ENCODE measurements at regions of chr20 and their contacts with region 1.

Region 1: DNA sequence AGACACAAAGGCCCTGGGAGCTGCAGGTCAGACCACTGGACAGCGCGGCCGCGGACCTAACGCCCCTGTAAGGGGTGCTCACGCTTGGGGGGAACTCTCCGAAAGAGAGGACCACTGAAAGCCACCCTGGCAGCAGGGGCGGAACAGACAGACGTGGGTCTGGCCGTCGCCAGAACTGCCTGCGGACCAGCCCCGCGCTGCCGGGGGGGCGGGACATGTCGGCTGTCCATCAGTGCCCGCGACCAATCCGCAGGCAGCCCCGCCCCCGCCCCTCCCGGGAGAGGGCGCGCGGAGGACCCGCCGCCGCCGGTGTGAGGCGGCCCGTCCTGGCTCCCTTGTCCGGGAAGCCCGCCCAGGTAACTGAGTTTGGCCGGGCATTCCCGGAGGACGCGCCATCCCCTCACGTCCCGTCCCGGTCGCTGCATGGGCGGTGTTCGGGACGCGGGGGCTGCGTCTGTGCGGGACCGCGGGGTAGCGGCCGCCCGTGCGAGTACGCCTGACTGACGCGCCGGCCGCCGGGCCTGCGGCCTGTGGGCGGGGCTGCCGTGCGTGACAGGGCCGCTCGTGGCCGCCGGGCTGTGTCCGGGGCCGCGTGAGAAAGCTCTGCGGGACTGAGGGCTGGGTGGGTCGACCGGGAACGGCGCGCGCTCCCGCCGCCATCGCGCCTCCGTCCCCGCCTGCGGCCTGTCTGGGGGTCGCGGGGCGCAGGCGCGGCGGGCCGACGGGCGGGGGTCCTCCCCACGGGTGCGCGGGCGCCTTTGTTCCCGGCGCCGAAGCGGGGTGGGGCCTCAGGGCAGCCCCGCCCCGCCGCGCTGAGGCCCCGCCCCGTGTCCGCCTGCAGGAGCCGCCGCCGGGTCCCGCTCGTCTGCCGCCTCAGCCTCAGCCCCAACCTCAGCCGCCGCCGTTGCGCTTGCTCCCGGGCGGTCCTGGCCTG is at the start of gene PLCG1:
- DNase-seq: no peak
- ATAC-seq: peak; percentile 63
- H3K4me3 ChIP-seq: peak within 1 kb of the TSS; percentile 81
- H3K27ac ChIP-seq: peak within 1 kb of the TSS; percentile 88
- H3K4me1 ChIP-seq: peaks cover 56% of the 10 kb centered on the region
- H3K27me3 ChIP-seq: no peaks in the 10 kb centered on the region
- CTCF ChIP-seq: no peak
- EP300 ChIP-seq: no peak
- POLR2A ChIP-seq: peak; percentile 65
- RAD21 ChIP-seq: no peak
- polyA plus RNA-seq, gene PLCG1: 2.6 to 3.0 TPM

Region 2: GRCh38 chr20:40339661-40340449 is 797.1 kb before region 1 on chr20:
- CTCF ChIA-PET with region 1: no interaction called
- POLR2A ChIA-PET with region 1: no interaction called
- RAD21 ChIA-PET with region 1: no interaction called
- SMC1A ChIA-PET with region 1: no interaction called
- in situ Hi-C with region 1: no loop called
- intact Hi-C with region 1: no loop called
- DNase-seq: no peak
- ATAC-seq: no peak
- H3K4me3 ChIP-seq: no peak overlapping the region
- H3K27ac ChIP-seq: no peak overlapping the region
- H3K4me1 ChIP-seq: no peaks in the 10 kb centered on the region
- H3K27me3 ChIP-seq: peaks cover 0 to 3% of the 10 kb centered on the region in 2 experiments; a peak in 2 of 4 replicates
- CTCF ChIP-seq: no peak
- EP300 ChIP-seq: no peak
- POLR2A ChIP-seq: no peak
- RAD21 ChIP-seq: no peak

Region 3: DNA sequence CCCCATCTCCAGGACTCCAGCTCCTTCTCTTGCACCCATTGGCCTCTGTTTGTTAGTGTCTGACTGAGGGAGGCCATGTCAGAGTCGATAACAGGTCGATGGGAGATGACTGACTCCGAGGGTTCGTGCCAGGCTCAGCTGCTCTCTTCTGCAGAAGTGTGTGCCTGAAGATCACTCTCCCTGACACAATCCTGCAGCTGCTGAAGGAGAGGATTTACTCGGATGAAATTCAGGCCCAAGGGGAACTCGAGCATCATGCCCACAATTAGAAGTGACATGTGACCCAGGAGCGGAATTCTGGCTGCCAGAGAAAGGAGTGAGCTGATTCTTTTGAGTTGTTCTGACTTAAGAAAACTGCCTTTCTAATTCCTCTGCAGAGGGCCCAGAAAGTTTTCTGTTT is 766.1 kb before region 1 on chr20:
- CTCF ChIA-PET with region 1: no interaction called
- POLR2A ChIA-PET with region 1: no interaction called
- RAD21 ChIA-PET with region 1: no interaction called
- SMC1A ChIA-PET with region 1: no interaction called
- in situ Hi-C with region 1: no loop called
- intact Hi-C with region 1: no loop called
- DNase-seq: no peak
- ATAC-seq: no peak
- H3K4me3 ChIP-seq: no peak overlapping the region
- H3K27ac ChIP-seq: no peak overlapping the region
- H3K4me1 ChIP-seq: no peaks in the 10 kb centered on the region
- H3K27me3 ChIP-seq: no peaks in the 10 kb centered on the region
- CTCF ChIP-seq: no peak
- EP300 ChIP-seq: no peak
- POLR2A ChIP-seq: no peak
- RAD21 ChIP-seq: no peak

Region 4: GRCh38 chr20:40970201-40970600 is 166.7 kb before region 1 on chr20:
- CTCF ChIA-PET with region 1: interaction called, 37 read pairs
- POLR2A ChIA-PET with region 1: interaction called, 5 read pairs
- RAD21 ChIA-PET with region 1: interaction called, 20 read pairs
- SMC1A ChIA-PET with region 1: interaction called, 5 read pairs
- in situ Hi-C with region 1: no loop called
- intact Hi-C with region 1: no loop called
- DNase-seq: no peak
- ATAC-seq: no peak
- H3K4me3 ChIP-seq: no peak overlapping the region
- H3K27ac ChIP-seq: no peak overlapping the region
- H3K4me1 ChIP-seq: no peaks in the 10 kb centered on the region
- H3K27me3 ChIP-seq: no peaks in the 10 kb centered on the region
- CTCF ChIP-seq: no peak
- EP300 ChIP-seq: no peak
- POLR2A ChIP-seq: no peak
- RAD21 ChIP-seq: no peak

Region 5: GRCh38 chr20:41095110-41095969 is 41.6 kb before region 1 on chr20:
- CTCF ChIA-PET with region 1: interaction called, 31 read pairs
- POLR2A ChIA-PET with region 1: no interaction called
- RAD21 ChIA-PET with region 1: interaction called, 5 read pairs
- SMC1A ChIA-PET with region 1: interaction called, 7 read pairs
- in situ Hi-C with region 1: no loop called
- intact Hi-C with region 1: no loop called
- DNase-seq: no peak
- ATAC-seq: peak; percentile 88
- H3K4me3 ChIP-seq: no peak overlapping the region
- H3K27ac ChIP-seq: no peak overlapping the region
- H3K4me1 ChIP-seq: no peaks in the 10 kb centered on the region
- H3K27me3 ChIP-seq: no peaks in the 10 kb centered on the region
- CTCF ChIP-seq: peak; percentile 74 to 85 (median 84)
- EP300 ChIP-seq: no peak
- POLR2A ChIP-seq: no peak
- RAD21 ChIP-seq: peak; percentile 85

Region 6: GRCh38 chr20:41155261-41155660 is 18.3 kb after region 1 on chr20:
- CTCF ChIA-PET with region 1: interaction called, 105 read pairs
- POLR2A ChIA-PET with region 1: interaction called, 84 read pairs
- RAD21 ChIA-PET with region 1: interaction called, 72 read pairs
- SMC1A ChIA-PET with region 1: interaction called, 71 read pairs
- in situ Hi-C with region 1: no loop called
- intact Hi-C with region 1: no loop called
- DNase-seq: no peak
- ATAC-seq: no peak
- H3K4me3 ChIP-seq: no peak overlapping the region
- H3K27ac ChIP-seq: no peak overlapping the region
- H3K4me1 ChIP-seq: peaks cover 54% of the 10 kb centered on the region
- H3K27me3 ChIP-seq: no peaks in the 10 kb centered on the region
- CTCF ChIP-seq: no peak
- EP300 ChIP-seq: no peak
- POLR2A ChIP-seq: no peak
- RAD21 ChIP-seq: no peak

Region 7: DNA sequence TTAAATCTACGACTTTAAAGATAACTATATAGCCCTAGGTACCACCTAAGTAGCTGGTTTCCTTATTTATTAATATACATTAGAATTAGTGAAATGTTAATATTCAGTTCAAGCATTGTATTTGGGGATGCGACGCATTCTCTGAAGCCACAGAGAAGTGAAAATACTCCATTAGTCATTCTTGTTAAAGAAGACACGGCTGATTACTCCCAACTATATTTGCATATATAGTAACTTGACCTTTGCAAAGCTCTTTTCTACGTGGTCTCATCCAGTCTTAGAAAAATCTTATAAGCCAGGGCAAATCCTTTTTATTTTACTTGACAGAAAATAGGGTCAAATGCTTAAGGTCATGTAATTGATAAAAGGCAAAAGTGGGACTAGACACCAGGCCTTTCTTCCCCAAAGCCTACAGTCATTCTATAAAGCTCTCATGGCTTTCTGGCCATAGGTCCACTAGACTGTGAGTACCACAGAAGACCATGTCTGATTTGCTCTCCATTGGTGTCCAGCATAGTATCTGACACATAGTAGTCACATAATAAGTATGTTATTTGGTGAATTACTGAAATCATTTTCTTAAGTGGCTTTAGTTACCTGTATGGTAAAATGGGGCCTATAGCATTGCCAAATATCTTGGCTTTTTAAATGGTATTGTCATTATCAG is 169.2 kb after region 1 on chr20:
- CTCF ChIA-PET with region 1: interaction called, 14 read pairs
- POLR2A ChIA-PET with region 1: interaction called, 9 read pairs
- RAD21 ChIA-PET with region 1: interaction called, 5 read pairs
- SMC1A ChIA-PET with region 1: interaction called, 8 read pairs
- in situ Hi-C with region 1: no loop called
- intact Hi-C with region 1: no loop called
- DNase-seq: peak; percentile 42
- ATAC-seq: peak; percentile 98
- H3K4me3 ChIP-seq: peak overlapping the region; percentile 36; the same call in 1 of the 2 replicates
- H3K27ac ChIP-seq: peak overlapping the region; percentile 71
- H3K4me1 ChIP-seq: peaks cover 30% of the 10 kb centered on the region
- H3K27me3 ChIP-seq: no peaks in the 10 kb centered on the region
- CTCF ChIP-seq: no peak
- EP300 ChIP-seq: peak; percentile 50 to 58; a peak in 2 of 4 replicates
- POLR2A ChIP-seq: no peak
- RAD21 ChIP-seq: no peak